Cardiac septum (tissue), 1 donor: ENCODE measurements at regions of chr2 and their contacts with region 1.

Region 1: DNA sequence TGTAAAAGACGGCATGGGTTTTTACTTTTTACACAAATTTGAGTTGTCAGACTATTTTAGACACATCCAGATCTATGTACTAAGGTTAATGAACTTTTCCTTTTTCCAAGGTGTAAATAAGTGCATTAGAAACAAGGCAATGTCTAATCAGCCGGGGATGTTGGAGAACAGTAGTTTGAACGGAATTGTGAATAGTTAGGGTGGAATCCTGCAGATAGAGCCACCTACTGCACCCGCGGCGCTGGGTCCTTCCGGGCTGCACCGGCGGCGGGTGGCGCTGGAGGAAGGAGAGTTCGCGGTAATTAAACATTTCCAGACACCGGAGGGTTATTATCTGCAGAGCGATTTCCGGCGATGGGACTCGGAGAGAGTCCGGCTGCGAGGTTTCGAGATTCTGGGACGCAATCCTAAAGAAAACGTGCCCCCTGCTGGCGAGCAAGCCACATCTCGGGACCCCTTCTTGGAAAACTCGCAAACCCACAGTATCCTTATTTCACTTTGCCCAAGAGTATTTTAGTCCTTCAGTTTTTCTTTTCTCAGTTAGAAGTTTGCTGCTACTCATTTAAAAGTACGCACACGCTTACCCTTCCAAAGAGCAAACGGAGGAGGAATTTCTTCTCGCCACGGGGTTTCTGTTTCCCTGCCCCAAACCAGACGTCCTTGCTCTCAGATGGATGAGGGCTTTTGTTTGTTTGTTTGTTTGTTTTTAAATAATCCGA is 4.5 kb upstream of the OSR1 start:
- DNase-seq: peak; percentile 85

Region 2: GRCh38 chr2:18435421-18436037 is 927.4 kb before region 1 on chr2:
- intact Hi-C with region 1: loop called (anchors 5 kb)
- DNase-seq: no peak

Region 3: DNA sequence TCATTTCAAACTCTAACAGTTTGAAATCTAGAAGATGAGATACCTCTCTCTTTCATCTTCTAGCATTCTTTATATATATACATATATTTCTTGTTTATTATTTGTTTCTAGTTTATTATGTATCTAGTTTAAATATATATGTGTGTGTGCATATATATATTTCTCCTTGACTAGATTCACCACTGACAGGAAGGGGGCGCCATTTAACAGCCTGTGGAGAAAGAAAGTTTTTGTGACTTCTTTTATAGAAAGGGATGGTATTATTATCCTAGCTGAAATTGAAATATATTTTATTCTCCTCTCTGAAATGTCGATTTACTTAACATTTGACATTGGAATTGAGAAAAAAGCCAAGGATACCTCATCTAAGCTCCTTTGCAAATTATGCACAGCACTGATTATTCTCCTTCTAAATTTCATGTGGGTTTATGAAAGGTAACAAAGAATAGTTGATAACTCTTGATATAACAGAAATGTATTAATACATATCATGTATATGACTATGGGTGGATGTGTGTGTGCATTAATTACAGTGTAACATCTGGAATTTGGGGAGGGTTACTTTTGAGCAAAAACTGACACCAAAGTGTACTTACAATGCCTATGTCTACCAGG is 612.9 kb before region 1 on chr2:
- intact Hi-C with region 1: loop called (anchors 1 kb)
- DNase-seq: no peak

Region 4: DNA sequence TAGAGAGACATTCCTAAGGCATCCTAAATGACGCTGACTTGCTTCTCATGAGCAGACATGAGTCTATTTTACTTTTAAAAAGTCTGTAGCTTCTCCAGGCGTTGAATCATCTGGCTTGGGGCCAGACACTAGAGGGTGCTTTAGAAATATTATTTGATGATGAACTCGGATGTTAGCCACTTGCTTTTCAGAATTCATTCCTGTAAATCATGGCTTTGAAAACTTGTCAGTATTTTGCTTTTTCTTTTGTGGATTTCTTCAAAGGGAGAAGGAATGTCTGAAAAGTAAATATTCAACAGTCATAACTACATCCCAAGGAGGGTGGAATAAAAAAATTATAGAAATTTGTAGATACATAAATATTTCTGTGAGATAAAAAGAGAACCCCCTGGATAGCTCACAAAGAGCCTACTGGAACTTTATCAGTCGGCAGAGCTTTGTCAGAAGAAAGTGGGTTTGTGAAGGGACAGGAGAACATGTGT is 375.3 kb before region 1 on chr2:
- intact Hi-C with region 1: loop called (anchors 2 kb)
- DNase-seq: no peak

Region 5: GRCh38 chr2:19496646-19497045 is 133.7 kb after region 1 on chr2:
- intact Hi-C with region 1: no loop called
- DNase-seq: no peak

Region 6: DNA sequence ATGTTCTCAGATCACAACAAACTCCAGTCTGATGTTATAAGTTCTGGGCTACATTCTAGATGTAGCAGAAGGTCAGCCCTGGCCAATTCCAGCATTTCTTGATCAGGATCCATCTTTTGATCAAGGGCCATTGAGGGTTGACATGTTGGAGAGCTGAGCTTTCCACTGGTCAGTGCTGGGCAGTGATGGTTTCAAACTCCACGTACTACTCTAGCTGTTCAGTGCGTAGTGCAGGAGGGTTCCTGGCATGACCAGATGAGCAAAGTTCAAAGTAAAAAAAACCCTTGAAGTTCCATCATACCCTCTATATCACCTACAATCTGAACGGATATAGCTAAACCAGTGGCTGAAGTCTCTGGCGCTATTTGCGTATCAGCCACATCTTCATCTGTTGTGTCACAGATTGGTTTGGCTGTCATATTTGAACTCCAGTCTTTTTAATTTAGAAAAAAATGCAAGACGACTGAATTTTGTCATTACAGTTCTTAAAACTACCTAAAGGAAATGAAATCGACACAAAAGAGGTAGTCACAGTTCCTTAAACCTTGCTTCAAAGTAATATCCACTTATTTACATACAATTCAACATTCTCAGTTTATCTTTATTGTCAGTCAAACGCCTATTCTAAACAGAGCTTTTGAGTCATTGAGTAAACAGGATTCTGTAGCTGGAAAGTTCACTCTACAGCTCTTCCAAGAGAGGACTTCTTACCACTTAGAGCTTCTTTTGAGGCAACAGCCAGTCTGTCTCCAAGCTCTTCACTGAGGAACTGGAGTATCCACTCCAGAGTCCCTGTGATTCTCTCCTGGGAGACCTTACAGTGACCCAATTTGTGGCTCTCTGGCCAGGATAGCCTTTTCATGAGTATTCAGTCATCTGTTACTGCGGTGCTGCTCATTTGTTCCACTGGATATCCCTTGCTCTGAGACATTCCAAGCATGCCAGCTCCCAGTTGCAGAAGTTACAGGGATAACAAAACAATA is 206.2 kb after region 1 on chr2:
- intact Hi-C with region 1: no loop called
- DNase-seq: no peak